Activated T-helper 2 cell treated with anti-CD3 and anti-CD28 coated beads, Interferon-gamma antibody, Interleukin-2, Interleukin-4, amounts not matched to agents 10 μg/mL and 5 μg/mL and 100 μg/mL, durations not matched to agents 14 hours and 24 hours and 36 hours (primary cell): ENCODE measurements at regions of chr12 and their contacts with region 1.

Region 1: DNA sequence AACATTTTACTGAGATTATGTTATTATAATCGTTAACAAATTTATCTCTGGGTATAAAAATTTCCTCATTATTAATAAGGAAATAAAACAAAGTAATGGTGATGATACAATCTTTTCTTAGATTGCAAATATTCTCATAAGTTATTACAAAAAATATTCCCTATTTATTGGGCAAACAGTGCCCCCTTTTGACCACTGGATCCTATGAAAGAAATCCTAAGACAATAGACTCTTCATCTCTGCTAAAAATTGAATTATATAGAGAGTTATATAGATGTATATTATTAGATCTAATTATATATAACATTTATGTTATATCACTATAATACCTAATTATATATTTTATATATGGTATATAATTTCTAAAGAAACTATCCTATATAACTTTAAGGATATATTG is 94.2 kb upstream of the FGD4 start:
- DNase-seq: no peak
- H3K4me3 Mint-ChIP-seq: no peak overlapping the region
- H3K27ac Mint-ChIP-seq: no peak overlapping the region
- H3K4me1 Mint-ChIP-seq: no peaks in the 10 kb centered on the region
- H3K27me3 Mint-ChIP-seq: no peaks in the 10 kb centered on the region

Region 2: DNA sequence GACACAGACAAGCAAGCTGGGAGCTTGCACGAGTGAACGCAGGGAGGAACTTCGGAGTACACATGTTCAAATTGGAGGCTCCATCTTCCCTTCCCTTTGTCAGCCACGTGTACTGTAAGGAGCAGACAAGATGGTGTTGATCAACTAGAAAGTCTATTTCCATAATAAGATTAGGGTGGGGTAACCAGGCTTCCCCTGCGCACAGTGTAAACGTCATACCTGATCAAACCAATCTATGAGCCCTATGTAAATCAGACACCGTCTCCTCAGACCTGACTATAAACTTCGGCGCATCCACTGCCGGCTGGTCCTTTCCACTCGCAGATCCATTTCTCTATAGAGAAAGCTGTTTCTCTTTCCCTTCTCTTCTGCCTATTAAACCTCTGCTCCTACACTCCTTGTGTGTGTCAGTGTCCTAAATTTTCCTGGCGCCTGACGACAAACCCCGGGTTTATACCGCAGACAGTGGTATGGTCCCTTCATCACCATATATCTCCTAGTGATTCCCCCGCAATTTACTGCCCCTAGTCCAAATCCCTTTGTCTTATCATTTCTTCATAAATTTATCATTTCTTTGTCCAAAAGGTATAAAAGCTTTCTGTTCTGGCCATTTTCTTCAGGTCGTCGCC is 653.2 kb before region 1 on chr12:
- intact Hi-C with region 1: loop called (anchors 2 kb)
- DNase-seq: no peak
- H3K4me3 Mint-ChIP-seq: no peak overlapping the region
- H3K27ac Mint-ChIP-seq: no peak overlapping the region
- H3K4me1 Mint-ChIP-seq: peaks cover 11% of the 10 kb centered on the region
- H3K27me3 Mint-ChIP-seq: peaks cover 4% of the 10 kb centered on the region